ENCODE measurements at regions of chr1 and their contacts with region 1.

Region 1: DNA sequence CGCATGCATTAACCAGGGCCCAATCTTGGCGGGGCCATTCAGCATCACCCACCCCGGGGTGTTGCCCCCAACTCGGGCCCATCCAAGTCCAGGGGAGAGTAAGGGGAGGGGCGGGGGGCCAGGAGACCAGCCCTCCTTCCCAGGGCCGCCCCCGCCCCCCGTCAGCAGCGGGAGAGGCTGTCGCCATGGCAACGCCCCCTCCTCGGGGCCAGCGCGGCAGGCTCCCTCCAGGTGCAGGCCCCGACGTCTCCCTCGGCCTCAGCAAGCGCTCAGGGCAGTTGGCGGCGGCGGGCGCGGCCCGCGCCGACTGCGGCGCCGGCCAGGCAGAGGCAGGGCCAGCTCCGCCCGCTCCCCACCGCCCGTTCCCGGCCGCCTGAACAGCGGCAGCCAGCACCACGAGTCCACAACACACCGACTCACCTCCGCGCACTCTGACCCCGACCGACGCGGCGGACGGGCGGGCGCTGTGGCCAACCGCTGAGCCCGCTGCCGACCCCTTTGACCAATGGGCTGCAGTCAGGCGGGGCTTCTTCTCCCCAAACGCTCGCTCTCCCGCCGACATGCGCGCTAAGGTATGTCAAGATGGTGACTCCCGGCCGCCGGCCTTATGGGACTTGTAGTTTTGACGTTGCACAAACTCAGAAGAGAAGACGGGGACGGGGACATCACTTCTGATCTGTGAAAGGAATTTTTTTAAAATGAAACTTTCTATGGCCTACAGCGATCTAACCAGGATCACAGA is at the start of gene ERI3:
- DNase-seq: peak; percentile 98
- H3K4me3 Mint-ChIP-seq: peak within 1 kb of the TSS; percentile 82
- H3K27ac Mint-ChIP-seq: peak within 1 kb of the TSS; percentile 48
- H3K4me1 Mint-ChIP-seq: peaks cover 33% of the 10 kb centered on the region
- H3K27me3 Mint-ChIP-seq: no peaks in the 10 kb centered on the region
- total RNA-seq, gene ERI3: 42.4 to 43.0 TPM

Region 2: GRCh38 chr1:43962324-43962723 is 392.7 kb before region 1 on chr1:
- CTCF ChIA-PET with region 1: no interaction called
- intact Hi-C with region 1: no loop called
- DNase-seq: no peak
- H3K4me3 Mint-ChIP-seq: no peak overlapping the region
- H3K27ac Mint-ChIP-seq: no peak overlapping the region
- H3K4me1 Mint-ChIP-seq: no peaks in the 10 kb centered on the region
- H3K27me3 Mint-ChIP-seq: no peaks in the 10 kb centered on the region

Region 3: GRCh38 chr1:43974443-43975248 is 380.4 kb before region 1 on chr1 and contains the start of gene ATP6V0B:
- CTCF ChIA-PET with region 1: no interaction called
- intact Hi-C with region 1: loop called (anchors 1 kb)
- DNase-seq: peak; percentile 97
- H3K4me3 Mint-ChIP-seq: peak within 1 kb of the TSS; percentile 85
- H3K27ac Mint-ChIP-seq: peak within 1 kb of the TSS; percentile 75
- H3K4me1 Mint-ChIP-seq: peaks cover 50% of the 10 kb centered on the region
- H3K27me3 Mint-ChIP-seq: no peaks in the 10 kb centered on the region
- total RNA-seq, gene ATP6V0B: 44.2 to 52.6 TPM